Activated naive CD4-positive, alpha-beta T cell treated with anti-CD3 and anti-CD28 coated beads for 36 hours (primary cell): ENCODE measurements at regions of chr6 and their contacts with region 1.

Region 1: GRCh38 chr6:36302227-36302976 is 32.5 kb downstream of the PNPLA1 start:
- DNase-seq: peak; percentile 98
- H3K4me3 Mint-ChIP-seq: no peak overlapping the region
- H3K27ac Mint-ChIP-seq: no peak overlapping the region
- H3K4me1 Mint-ChIP-seq: peaks cover 2% of the 10 kb centered on the region
- H3K27me3 Mint-ChIP-seq: no peaks in the 10 kb centered on the region

Region 2: DNA sequence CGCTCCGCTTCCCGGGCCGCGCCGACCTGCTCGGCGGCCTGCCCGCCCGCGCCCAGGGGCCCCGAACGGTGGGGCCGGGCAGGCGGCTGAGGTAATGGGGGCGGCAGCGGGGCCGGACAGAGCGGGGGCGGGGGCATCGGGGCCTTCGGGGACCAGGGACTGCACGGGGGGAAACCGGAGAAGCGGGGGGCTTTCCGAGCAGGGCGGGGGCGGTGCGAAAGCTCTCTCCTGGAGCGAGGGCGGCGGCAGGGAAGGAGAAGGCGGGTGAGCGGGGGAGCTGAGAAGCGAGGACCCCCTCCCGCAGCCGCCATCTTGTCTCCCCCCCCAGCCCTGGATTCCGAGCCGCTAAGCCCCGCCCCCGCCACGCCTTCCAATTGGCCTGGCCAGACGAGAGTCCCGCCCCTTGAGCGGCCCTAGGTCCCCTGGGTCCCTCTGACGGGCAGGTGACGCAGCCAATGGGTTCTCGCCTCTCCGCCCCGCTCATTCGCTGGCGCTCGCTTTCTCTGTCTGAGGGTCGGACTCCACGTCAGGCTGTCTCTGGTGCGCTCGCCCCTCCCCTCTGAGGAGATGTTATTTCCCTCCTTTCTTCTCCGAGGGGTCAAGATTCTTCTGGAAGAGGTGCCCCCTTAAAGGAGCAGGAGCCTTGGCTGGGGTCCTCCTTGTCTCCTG is 105.4 kb before region 1 on chr6:
- CTCF ChIA-PET with region 1: interaction called, 4 read pairs
- intact Hi-C with region 1: loop called (anchors 5 kb)
- DNase-seq: peak; percentile 100
- H3K4me3 Mint-ChIP-seq: peak overlapping the region; percentile 89
- H3K27ac Mint-ChIP-seq: peak overlapping the region; percentile 93
- H3K4me1 Mint-ChIP-seq: peaks cover 43% of the 10 kb centered on the region
- H3K27me3 Mint-ChIP-seq: no peaks in the 10 kb centered on the region

Region 3: DNA sequence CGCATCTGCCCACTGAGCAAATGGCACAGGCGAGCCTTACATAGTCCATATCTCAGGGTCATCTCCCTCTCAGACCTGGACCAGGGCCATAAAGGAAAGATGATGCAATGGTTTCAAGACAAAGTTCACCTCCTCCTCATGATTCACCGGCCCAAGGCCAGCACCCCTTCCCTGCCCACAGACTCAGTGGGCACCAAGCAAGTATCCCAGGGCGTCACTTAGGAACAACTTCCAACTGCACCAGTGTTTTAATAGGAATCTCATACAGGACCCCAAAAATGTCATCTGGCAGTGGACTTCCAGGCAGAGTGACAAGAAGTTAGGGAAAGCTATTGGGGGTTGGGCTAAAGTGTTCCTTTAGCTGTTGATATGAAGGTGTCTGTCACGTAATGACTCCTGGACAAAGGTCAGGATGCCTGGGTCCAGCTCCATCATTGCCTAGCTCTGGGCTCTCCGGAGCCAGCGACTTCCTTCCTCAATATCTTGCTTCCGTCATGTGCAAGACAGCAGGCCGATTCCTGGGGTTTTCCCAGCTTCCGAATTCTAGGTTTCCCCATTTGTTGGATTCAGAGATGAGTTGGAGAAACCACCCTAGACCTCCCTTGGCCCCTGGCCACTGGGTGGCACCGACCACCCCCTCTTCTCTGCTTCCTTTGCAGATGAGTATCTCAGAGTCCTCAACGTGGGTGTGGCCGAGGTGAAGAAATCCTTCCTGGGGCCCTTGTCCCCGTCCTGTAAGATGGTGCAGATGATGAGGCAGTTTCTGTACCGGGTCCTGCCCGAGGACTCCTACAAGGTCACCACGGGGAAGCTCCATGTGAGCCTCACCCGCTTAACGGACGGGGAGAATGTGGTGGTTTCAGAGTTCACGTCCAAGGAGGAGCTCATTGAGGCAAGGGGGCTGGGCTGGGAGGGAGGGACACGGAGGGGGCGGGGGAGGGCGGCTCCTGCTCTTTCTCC is 11.5 kb before region 1 on chr6:
- CTCF ChIA-PET with region 1: interaction called, 12 read pairs
- intact Hi-C with region 1: no loop called
- DNase-seq: no peak
- H3K4me3 Mint-ChIP-seq: no peak overlapping the region
- H3K27ac Mint-ChIP-seq: no peak overlapping the region
- H3K4me1 Mint-ChIP-seq: peaks cover 6% of the 10 kb centered on the region
- H3K27me3 Mint-ChIP-seq: no peaks in the 10 kb centered on the region

Region 4: GRCh38 chr6:36314221-36315014 is 12.0 kb after region 1 on chr6:
- CTCF ChIA-PET with region 1: interaction called, 22 read pairs
- intact Hi-C with region 1: no loop called
- DNase-seq: no peak
- H3K4me3 Mint-ChIP-seq: no peak overlapping the region
- H3K27ac Mint-ChIP-seq: no peak overlapping the region
- H3K4me1 Mint-ChIP-seq: no peaks in the 10 kb centered on the region
- H3K27me3 Mint-ChIP-seq: no peaks in the 10 kb centered on the region

Region 5: DNA sequence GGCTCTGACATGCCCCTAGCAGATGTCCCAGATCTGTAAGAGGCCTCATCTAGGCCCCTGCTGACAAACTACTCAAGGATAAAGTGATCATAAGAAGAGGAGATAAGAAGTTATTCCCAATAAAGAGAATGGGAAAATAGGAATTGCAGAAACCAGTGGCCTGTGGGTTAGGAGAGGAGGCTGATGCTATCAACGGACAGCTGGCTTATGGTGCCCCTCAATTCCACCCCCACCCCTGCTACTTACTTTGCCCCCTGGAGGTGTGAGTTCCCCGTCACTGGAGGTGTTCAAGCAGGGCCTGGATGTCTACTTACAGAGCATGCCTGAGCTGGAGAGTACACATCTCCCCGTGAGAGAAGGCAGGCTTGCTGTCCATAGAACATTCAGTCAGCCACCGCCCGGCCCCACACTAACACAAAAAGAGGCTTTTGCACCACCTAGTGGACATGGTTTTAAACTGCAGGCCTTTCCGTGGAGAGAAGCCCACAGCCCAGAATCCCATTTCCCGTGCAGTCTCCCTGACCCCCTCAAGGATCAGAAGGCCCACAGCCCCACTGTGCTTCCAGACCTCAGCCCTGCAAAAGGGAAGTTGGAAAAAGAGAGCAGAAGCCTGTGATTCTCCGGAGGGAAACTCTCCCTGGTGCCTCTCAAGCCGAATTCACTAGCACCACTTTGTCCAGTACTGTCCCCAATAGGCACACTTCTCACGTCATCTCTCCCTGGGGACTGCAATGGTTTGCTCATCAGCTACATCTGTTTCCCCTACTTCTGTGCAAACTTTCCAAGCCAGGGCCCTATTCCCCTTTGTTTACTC is 58.0 kb after region 1 on chr6:
- CTCF ChIA-PET with region 1: interaction called, 26 read pairs
- intact Hi-C with region 1: loop called (anchors 1 kb)
- DNase-seq: peak; percentile 83
- H3K4me3 Mint-ChIP-seq: no peak overlapping the region
- H3K27ac Mint-ChIP-seq: no peak overlapping the region
- H3K4me1 Mint-ChIP-seq: peaks cover 9% of the 10 kb centered on the region
- H3K27me3 Mint-ChIP-seq: no peaks in the 10 kb centered on the region

Region 6: GRCh38 chr6:36463676-36464075 is 161.3 kb after region 1 on chr6:
- CTCF ChIA-PET with region 1: no interaction called
- intact Hi-C with region 1: no loop called
- DNase-seq: no peak
- H3K4me3 Mint-ChIP-seq: no peak overlapping the region
- H3K27ac Mint-ChIP-seq: no peak overlapping the region
- H3K4me1 Mint-ChIP-seq: peaks cover 25% of the 10 kb centered on the region
- H3K27me3 Mint-ChIP-seq: no peaks in the 10 kb centered on the region